ENCODE measurements at regions of chr11 and their contacts with region 1.

Region 1: DNA sequence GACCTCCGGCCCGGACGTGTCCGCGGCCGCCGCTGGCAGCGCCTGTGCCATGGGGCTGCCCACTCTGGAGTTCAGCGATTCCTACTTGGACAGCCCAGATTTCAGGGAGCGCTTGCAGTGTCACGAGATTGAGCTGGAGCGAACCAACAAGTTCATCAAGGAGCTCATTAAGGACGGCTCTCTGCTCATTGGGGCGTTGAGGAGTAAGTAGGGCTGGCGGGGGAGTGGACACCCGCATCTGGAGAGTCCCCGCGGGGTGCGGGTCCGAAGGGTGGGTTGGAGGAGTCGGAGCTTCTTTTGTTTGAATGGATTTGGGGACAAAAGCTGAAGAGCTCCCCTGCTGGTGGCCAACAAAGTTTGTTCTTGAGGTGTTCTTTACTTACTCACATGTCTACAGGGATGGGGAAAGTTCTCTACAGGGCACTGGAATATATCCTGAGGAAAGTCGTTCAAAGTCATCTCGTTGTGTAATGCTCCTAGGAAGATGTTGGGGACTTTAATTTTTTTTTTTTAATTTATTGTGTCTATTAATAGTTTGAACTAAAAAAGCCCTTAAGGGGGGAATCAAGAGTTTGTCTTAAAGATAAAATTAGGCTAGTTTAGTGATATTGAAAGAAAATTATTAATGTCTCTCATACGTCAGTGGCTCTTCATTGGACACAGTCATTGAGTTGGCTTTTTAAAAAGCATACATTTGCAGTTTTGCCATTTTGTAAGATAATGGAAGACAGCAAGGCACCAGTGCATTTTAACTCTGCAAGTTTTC is 725 bp downstream of the ARHGAP42 start:
- DNase-seq: peak; percentile 38 to 56
- ATAC-seq: peak; percentile 87 to 91
- H3K4me3 ChIP-seq: peak overlapping the region; percentile 52 to 69 (median 68)
- H3K27ac ChIP-seq: peak overlapping the region; percentile 77 to 90 (median 84)
- H3K4me1 ChIP-seq: peaks cover 12 to 27% of the 10 kb centered on the region in 2 donors
- H3K27me3 ChIP-seq: no peaks in the 10 kb centered on the region
- CTCF ChIP-seq: peak in 4 of 5 experiments; percentile 38 to 64 (median 60)
- POLR2A ChIP-seq: peak in 1 of 2 donors; percentile 31

Region 2: GRCh38 chr11:100632941-100633452 is 54.8 kb before region 1 on chr11:
- in situ Hi-C with region 1: no loop called
- intact Hi-C with region 1: loop called (anchors 5 kb)
- DNase-seq: peak; percentile 30 to 44
- ATAC-seq: peak; percentile 85 to 90
- H3K4me3 ChIP-seq: peak overlapping the region in 2 of 4 donors; percentile 4 to 13
- H3K27ac ChIP-seq: peak overlapping the region; percentile 60 to 73 (median 62)
- H3K4me1 ChIP-seq: peaks cover 19 to 47% of the 10 kb centered on the region in 2 donors
- H3K27me3 ChIP-seq: no peaks in the 10 kb centered on the region
- CTCF ChIP-seq: no peak
- POLR2A ChIP-seq: no peak